Endothelial cell of umbilical vein (primary cell): ENCODE measurements at regions of chr1 and their contacts with region 1.

Region 1: DNA sequence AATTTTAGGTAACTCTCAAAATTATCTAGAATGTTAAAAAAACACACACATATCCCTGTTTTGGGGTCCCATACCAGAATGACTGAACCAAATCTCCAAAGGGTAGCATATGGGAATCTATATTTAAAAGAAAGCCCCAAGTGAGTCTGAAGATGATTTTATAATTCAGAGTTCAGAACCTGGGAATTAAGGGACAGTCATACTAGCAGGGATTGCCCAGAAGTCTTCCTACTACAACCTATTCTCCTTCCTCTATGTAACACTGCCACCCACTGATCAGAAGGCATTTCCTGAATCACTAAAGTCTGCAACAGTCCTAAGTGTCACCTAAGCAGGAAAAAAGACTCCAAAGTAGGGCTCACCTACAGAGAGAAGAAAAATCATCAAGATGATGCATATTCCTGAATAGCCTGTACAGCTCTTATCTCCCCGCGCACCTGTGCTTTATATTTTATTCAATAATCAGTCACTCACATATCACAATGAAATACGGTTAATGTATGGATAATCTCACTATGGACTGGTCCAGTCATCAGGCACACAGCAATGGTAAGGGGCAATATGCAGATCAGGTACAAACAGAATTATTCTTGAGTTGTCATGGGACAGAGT is 4.9 kb downstream of the RGS1 start:
- DNase-seq: peak; percentile 75
- H3K4me3 ChIP-seq: no peak overlapping the region
- H3K27ac ChIP-seq: no peak overlapping the region
- H3K4me1 ChIP-seq: no peaks in the 10 kb centered on the region
- H3K27me3 ChIP-seq: no peaks in the 10 kb centered on the region
- CTCF ChIP-seq: peak; percentile 25 to 35
- POLR2A ChIP-seq: no peak

Region 2: DNA sequence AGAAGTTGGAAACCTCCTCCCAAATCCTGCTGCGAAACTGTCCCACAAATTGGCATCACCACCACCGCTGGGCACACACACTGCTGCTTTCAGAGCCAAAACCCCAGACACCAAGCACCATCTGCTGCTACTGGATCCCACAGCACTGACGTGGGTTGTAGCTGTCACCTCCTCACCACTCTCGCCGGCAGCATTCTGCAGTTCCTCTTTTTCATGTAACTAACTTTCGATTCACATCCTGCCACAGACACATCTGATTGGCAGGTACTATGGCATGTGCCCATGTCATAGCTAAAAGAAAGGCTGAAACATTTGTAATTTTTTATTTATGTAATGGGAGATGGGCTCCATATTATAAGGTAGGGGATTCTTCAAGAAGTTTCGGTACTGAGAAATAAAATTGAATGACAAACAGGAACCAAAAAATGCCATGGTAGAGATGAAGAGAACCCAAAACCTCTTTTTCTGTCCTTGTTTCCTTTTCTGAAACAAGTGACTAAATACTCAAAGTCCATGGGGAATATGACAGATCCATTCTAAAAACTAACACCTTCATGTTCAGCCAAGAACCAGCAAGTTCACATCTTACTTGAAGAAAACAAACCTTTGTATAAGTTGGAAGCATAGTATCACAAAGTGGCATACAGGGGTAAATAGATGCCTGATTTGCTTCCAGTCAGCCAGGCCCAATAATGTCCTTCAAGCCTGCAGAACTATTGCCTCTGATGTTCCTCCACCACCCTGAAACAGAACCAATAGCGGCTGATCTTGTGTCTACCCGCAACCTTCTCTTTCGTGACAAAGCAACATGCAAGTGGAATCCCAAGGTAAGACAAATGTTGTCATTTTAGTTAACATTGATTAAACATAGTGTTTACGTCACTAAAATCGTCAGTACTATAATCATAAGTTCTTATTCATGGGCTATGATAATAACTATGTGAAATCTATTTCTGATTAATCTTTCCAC is 28.9 kb after region 1 on chr1:
- CTCF ChIA-PET with region 1: interaction called, 7 read pairs
- POLR2A ChIA-PET with region 1: no interaction called
- dilution Hi-C with region 1: no loop called
- intact Hi-C with region 1: loop called (anchors 2 kb)
- DNase-seq: no peak
- H3K4me3 ChIP-seq: no peak overlapping the region
- H3K27ac ChIP-seq: no peak overlapping the region
- H3K4me1 ChIP-seq: no peaks in the 10 kb centered on the region
- H3K27me3 ChIP-seq: no peaks in the 10 kb centered on the region
- CTCF ChIP-seq: no peak
- POLR2A ChIP-seq: no peak